A549 (cell line): ENCODE measurements at regions of chr12 and their contacts with region 1.

Region 1: GRCh38 chr12:48851883-48852733 is at the start of gene DDX23:
- DNase-seq: peak; percentile 98
- ATAC-seq: peak; percentile 95
- H3K4me3 ChIP-seq: peak within 1 kb of the TSS; percentile 91
- H3K27ac ChIP-seq: peak within 1 kb of the TSS; percentile 95 to 97
- H3K4me1 ChIP-seq: peaks cover 21% of the 10 kb centered on the region; the same call in 2 of the 3 replicates
- CTCF ChIP-seq: no peak
- EP300 ChIP-seq: no peak
- POLR2A ChIP-seq: peak; percentile 71
- RAD21 ChIP-seq: no peak
- polyA plus RNA-seq, gene DDX23: 132 TPM in 2 replicates

Region 2: DNA sequence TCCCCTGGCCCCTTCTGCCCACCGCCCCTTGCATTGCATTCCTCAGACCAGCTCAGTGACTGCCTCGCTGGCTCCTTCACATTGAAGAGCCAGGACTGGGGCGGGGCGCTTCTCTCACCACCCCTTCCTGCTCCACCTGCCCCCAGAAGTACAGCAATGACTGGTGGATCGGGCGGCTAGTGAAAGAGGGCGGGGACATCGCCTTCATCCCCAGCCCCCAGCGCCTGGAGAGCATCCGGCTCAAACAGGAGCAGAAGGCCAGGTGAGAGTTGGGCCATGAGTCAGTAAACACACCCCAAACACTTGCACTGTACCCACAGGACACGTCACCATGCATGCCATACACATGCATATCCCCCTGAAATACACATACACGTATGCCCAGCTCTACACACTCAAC is 28.0 kb before region 1 on chr12:
- CTCF ChIA-PET with region 1: interaction called, 67 read pairs
- POLR2A ChIA-PET with region 1: interaction called, 5 read pairs
- DNase-seq: no peak
- ATAC-seq: no peak
- H3K4me3 ChIP-seq: no peak overlapping the region
- H3K27ac ChIP-seq: no peak overlapping the region
- H3K4me1 ChIP-seq: 0 out of 3 replicates have a peak, but pooled peaks cover 4% of the 10 kb centered on the region
- CTCF ChIP-seq: no peak
- EP300 ChIP-seq: no peak
- POLR2A ChIP-seq: no peak
- RAD21 ChIP-seq: no peak

Region 3: GRCh38 chr12:48838048-48838447 is 14.1 kb before region 1 on chr12:
- CTCF ChIA-PET with region 1: interaction called, 26 read pairs
- POLR2A ChIA-PET with region 1: interaction called, 4 read pairs
- DNase-seq: no peak
- ATAC-seq: no peak
- H3K4me3 ChIP-seq: no peak overlapping the region
- H3K27ac ChIP-seq: no peak overlapping the region
- H3K4me1 ChIP-seq: no peaks in the 10 kb centered on the region
- CTCF ChIP-seq: no peak
- EP300 ChIP-seq: no peak
- POLR2A ChIP-seq: no peak
- RAD21 ChIP-seq: no peak

Region 4: DNA sequence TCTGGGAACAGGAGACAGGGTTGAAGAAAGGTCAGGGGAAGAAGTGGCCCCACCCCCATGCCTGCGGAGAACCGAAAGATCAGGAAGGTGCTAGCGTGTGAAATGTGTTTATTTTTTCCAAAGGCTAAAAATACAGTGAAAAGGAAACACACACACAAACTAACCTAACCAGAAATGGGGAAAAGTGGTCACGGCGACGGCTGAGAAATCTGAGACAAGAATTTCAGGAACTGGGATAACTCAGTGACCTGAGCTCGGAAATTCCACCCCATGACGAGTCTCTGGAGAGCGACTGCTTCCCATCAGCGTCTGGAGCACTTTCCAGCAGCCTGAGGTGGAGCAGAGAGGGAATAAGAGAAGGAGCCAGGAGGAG is 30.2 kb after region 1 on chr12:
- CTCF ChIA-PET with region 1: interaction called, 1,365 read pairs
- POLR2A ChIA-PET with region 1: interaction called, 26 read pairs
- DNase-seq: peak in 1 of 2 experiments; percentile 74
- ATAC-seq: peak; percentile 61 to 66
- H3K4me3 ChIP-seq: peak overlapping the region; percentile 29
- H3K27ac ChIP-seq: peak overlapping the region; percentile 88 to 90
- H3K4me1 ChIP-seq: peaks cover 59% of the 10 kb centered on the region
- CTCF ChIP-seq: no peak
- EP300 ChIP-seq: 0 out of 5 replicates have a peak, but pooled peaks of 1 of the 2 experiments have one; percentile 8
- POLR2A ChIP-seq: no peak
- RAD21 ChIP-seq: no peak

Region 5: DNA sequence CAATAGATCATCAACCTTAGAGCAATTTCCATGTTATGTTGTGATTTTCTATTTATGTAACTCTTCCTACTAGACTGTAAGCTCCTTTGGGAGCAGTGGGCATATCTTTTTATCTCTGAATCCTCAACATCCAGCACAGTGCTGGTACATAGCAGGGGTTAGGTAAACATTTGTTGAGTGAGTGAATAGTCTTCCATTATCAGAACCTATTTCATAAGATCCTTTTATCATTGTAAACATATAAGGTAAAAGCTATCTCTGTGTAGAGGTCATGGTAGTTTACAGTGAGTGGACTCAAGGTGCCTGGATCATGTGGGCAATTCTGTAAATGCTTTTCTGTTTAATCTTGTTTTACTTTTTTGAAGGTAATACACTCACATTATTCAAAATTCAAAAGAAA is 58.1 kb after region 1 on chr12:
- CTCF ChIA-PET with region 1: interaction called, 65 read pairs
- POLR2A ChIA-PET with region 1: no interaction called
- DNase-seq: peak in 1 of 2 experiments; percentile 46
- ATAC-seq: peak in 1 of 2 experiments; percentile 72; a peak in 3 of 6 replicates
- H3K4me3 ChIP-seq: no peak overlapping the region
- H3K27ac ChIP-seq: no peak overlapping the region
- H3K4me1 ChIP-seq: peaks cover 22% of the 10 kb centered on the region
- CTCF ChIP-seq: no peak
- EP300 ChIP-seq: no peak
- POLR2A ChIP-seq: no peak
- RAD21 ChIP-seq: no peak

Region 6: DNA sequence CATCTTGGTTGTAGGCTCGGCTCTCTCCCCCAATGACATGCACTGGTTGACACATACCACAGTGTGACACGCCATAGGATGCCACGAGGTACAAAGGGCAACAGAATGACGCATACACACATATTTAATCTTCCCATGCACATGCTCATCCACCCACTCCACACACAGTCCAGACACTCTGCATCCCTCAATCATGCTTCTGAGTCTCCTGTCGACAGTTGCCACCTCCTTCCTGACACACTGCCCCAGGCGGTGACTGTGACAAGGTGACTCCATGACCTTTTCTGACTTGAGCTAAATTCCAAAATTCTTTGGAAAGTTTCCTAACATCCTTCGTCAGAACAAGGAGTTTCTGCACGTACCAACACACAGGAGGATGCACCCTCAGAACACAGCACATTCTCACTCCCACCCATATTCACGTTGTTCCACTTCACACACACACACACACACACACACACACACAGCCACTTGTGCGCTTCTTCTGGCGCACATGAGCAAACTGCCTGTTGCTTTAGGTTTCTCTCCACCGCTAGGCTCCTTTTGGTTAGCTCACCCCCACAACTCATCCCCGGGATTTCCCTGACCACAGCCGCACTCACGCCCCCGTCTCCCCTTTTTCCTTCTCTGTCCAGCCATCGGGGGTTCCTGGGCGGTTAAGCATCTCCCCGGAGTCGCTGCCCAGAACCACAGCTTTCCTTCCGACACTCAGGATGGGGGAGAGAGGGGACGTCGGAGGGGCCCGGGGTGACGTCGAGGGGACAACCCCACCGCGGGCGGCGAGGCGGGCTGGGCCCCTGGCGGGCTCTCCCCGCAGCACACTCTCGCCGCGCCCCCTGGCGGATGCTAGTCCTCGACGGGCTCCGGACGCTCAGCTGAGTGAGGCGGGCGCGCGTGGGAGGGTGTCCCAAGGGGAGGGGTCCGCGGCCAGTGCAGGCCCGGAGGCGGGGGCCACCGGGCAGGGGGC is 125.5 kb after region 1 on chr12:
- CTCF ChIA-PET with region 1: interaction called, 19 read pairs
- POLR2A ChIA-PET with region 1: no interaction called
- DNase-seq: peak; percentile 64 to 74
- ATAC-seq: peak; percentile 69 to 85
- H3K4me3 ChIP-seq: peak overlapping the region; percentile 42; the same call in 2 of the 3 replicates
- H3K27ac ChIP-seq: 0 out of 6 replicates have a peak overlapping the region, but pooled peaks of 1 of the 2 experiments have one; percentile 31
- H3K4me1 ChIP-seq: peaks cover 16% of the 10 kb centered on the region; the same call in 2 of the 3 replicates
- CTCF ChIP-seq: peak; percentile 70
- EP300 ChIP-seq: no peak
- POLR2A ChIP-seq: no peak
- RAD21 ChIP-seq: peak in 1 of 2 experiments; percentile 39; a peak in 3 of 5 replicates

Region 7: DNA sequence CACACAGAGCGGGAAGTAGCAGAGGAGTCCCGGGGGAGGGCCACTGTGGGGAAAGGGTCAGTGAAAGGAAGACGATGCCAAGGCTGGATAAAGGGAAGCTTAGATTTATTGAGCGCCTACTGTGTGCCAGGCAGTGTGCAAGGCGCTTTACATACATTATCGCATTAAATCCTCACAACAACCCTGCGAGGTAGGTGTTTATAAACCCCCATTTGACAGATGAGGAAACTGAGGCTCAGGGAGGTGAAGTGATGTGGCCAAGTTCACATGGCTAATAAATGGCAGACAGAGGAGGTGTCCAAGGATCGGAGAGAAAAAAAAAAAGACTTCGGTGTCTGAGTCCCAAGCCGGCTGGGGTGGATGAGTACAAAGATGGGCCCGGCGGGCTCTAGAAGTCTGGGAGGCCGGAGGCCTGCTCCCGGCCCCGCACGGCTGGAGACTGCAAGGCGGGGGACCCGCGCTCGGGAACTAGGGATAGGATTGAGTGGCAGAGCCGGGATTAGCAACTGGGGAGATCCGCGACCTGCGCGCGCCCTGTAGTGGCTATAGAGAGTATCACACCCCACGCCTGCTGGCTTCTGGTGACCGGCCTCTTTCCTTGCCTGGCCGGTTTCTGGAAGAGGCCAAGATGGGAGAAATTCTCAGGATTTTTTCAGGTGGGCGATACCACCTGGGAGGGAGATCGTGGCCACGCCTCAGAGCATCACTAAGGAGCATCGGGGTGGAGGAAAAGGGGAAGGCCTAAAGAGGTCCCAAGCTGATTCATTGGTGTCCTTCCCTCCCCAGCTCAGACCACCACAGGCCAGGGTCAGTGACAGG is 143.2 kb after region 1 on chr12:
- CTCF ChIA-PET with region 1: interaction called, 41 read pairs
- POLR2A ChIA-PET with region 1: no interaction called
- DNase-seq: peak; percentile 89 to 99
- ATAC-seq: peak; percentile 65 to 76
- H3K4me3 ChIP-seq: peak overlapping the region; percentile 32
- H3K27ac ChIP-seq: peak overlapping the region; percentile 32 to 56; a peak in 3 of 6 replicates
- H3K4me1 ChIP-seq: peaks cover 18% of the 10 kb centered on the region
- CTCF ChIP-seq: peak; percentile 66
- EP300 ChIP-seq: no peak
- POLR2A ChIP-seq: no peak
- RAD21 ChIP-seq: peak; percentile 81 to 83